ENCODE measurements at regions of chr1 and their contacts with region 1.

Region 1: GRCh38 chr1:158149577-158150269 is 31.0 kb upstream of the CD1D start:
- DNase-seq: peak; percentile 97

Region 2: GRCh38 chr1:158180741-158181576 is 31.2 kb after region 1 on chr1 and contains the start of gene CD1D:
- intact Hi-C with region 1: loop called (anchors 5 kb)
- DNase-seq: peak; percentile 77
- total RNA-seq, gene CD1D: 1.2 TPM

Region 3: DNA sequence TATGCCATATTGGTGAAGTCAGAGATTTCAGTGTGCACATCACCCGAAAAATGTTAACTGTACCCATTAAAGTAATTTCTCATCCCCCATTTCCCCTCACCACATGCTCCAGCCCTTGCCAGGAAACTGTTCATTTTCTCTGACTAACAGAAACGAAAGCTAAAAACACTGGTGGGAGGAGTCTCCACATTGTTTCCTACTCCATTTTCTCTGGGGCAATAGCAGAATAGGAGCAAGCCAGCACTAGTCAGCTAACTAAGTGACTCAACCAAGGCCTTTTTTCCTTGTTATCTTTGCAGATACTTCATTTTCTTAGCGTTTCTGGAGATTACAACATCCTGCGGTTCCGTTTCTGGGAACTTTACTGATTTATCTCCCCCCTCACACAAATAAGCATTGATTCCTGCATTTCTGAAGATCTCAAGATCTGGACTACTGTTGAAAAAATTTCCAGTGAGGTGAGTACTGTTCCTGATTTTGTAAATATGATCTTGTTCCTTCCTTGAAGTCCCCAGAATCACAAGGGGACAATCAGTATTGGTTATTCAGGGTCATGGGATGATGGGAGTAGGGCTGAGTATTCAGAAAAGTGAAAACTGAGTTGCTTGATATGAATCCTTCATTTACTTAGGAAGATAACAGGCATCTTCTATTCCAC is 860.1 kb after region 1 on chr1 and contains the start of gene IFI16:
- intact Hi-C with region 1: loop called (anchors 5 kb)
- DNase-seq: no peak
- total RNA-seq, gene IFI16: 31.1 TPM

Measured in cardiac septum (tissue), 1 donor.